ENCODE measurements at regions of chr3 and their contacts with region 1.

Region 1: GRCh38 chr3:138594150-138594934 is at the start of gene CEP70:
- DNase-seq: peak; percentile 88 to 93 (median 92)
- ATAC-seq: peak; percentile 97
- H3K4me3 ChIP-seq: peak within 1 kb of the TSS; percentile 64
- H3K27ac ChIP-seq: peak within 1 kb of the TSS; percentile 78
- H3K4me1 ChIP-seq: peaks cover 0 to 7% of the 10 kb centered on the region in 2 experiments; a peak in 3 of 5 replicates
- H3K27me3 ChIP-seq: no peaks in the 10 kb centered on the region
- CTCF ChIP-seq: peak; percentile 72 to 91 (median 77)
- EP300 ChIP-seq: peak; percentile 61
- POLR2A ChIP-seq: peak; percentile 79
- RAD21 ChIP-seq: peak; percentile 72 to 81
- polyA plus RNA-seq, gene CEP70: 19.5 to 29.3 TPM

Region 2: DNA sequence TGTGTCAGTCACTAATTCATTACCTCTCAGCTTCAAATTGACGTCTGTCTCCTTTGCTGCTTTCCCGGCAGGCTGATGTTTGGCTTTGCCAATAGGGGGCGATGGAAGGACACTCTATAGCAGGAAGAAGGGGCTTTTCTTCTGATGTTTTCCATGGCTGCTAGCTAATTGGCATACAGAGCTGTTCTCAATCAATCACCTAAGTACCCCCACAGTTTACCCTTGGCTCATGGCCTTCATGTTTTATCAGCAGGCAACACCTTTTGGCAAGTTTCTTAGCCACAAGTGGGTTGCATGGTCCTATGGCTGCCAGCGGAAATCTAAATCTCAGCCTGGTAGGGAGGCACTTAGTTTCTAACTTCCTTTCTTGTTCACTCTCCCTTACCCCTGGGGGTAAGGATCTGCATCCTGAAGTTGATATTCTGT is 114.9 kb before region 1 on chr3:
- CTCF ChIA-PET with region 1: no interaction called
- POLR2A ChIA-PET with region 1: no interaction called
- in situ Hi-C with region 1: no loop called
- intact Hi-C with region 1: loop called (anchors 5 kb)
- DNase-seq: peak; percentile 38 to 58 (median 44)
- ATAC-seq: peak; percentile 81
- H3K4me3 ChIP-seq: no peak overlapping the region
- H3K27ac ChIP-seq: no peak overlapping the region
- H3K4me1 ChIP-seq: no peaks in the 10 kb centered on the region
- H3K27me3 ChIP-seq: no peaks in the 10 kb centered on the region
- CTCF ChIP-seq: peak; percentile 67 to 82 (median 75)
- EP300 ChIP-seq: no peak
- POLR2A ChIP-seq: no peak
- RAD21 ChIP-seq: peak; percentile 26 to 76; a peak in 2 of 4 replicates

Region 3: GRCh38 chr3:138834359-138835212 is 240.2 kb after region 1 on chr3 and contains the start of gene PIK3CB:
- CTCF ChIA-PET with region 1: no interaction called
- POLR2A ChIA-PET with region 1: no interaction called
- in situ Hi-C with region 1: no loop called
- intact Hi-C with region 1: loop called (anchors 2 kb)
- DNase-seq: peak; percentile 91 to 94 (median 92)
- ATAC-seq: peak; percentile 88
- H3K4me3 ChIP-seq: peak within 1 kb of the TSS; percentile 99
- H3K27ac ChIP-seq: peak within 1 kb of the TSS; percentile 91
- H3K4me1 ChIP-seq: peaks cover 8 to 9% of the 10 kb centered on the region in 2 experiments; a peak in 4 of 5 replicates
- H3K27me3 ChIP-seq: no peaks in the 10 kb centered on the region
- CTCF ChIP-seq: peak; percentile 59 to 97 (median 75)
- EP300 ChIP-seq: peak; percentile 2; the same call in 1 of the 2 replicates
- POLR2A ChIP-seq: peak; percentile 94
- RAD21 ChIP-seq: peak; percentile 61 to 70
- polyA plus RNA-seq, gene PIK3CB: 15.3 to 19.6 TPM

Region 4: GRCh38 chr3:138923531-138923994 is 329.2 kb after region 1 on chr3:
- CTCF ChIA-PET with region 1: interaction called, 7 read pairs
- POLR2A ChIA-PET with region 1: interaction called, 4 read pairs
- in situ Hi-C with region 1: no loop called
- intact Hi-C with region 1: loop called (anchors 2 kb)
- DNase-seq: peak; percentile 68 to 91 (median 76)
- ATAC-seq: peak; percentile 95
- H3K4me3 ChIP-seq: no peak overlapping the region
- H3K27ac ChIP-seq: no peak overlapping the region
- H3K4me1 ChIP-seq: peaks cover 2 to 3% of the 10 kb centered on the region in 2 experiments; a peak in 4 of 5 replicates
- H3K27me3 ChIP-seq: no peaks in the 10 kb centered on the region
- CTCF ChIP-seq: peak; percentile 86 to 95 (median 95)
- EP300 ChIP-seq: no peak
- POLR2A ChIP-seq: no peak
- RAD21 ChIP-seq: peak; percentile 78 to 93

Region 5: GRCh38 chr3:139020868-139021234 is 426.5 kb after region 1 on chr3 and contains the start of gene PRR23B:
- CTCF ChIA-PET with region 1: no interaction called
- POLR2A ChIA-PET with region 1: no interaction called
- in situ Hi-C with region 1: no loop called
- intact Hi-C with region 1: no loop called
- DNase-seq: peak; percentile 8 to 27 (median 20)
- ATAC-seq: peak; percentile 48; the same call in 1 of the 3 replicates
- H3K4me3 ChIP-seq: no peak within 1 kb of the TSS
- H3K27ac ChIP-seq: no peak within 1 kb of the TSS
- H3K4me1 ChIP-seq: peaks cover 0 to 2% of the 10 kb centered on the region in 2 experiments; a peak in 1 of 5 replicates
- H3K27me3 ChIP-seq: no peaks in the 10 kb centered on the region
- CTCF ChIP-seq: peak; percentile 29 to 50 (median 30); a peak in 4 of 6 replicates
- EP300 ChIP-seq: no peak
- POLR2A ChIP-seq: no peak
- RAD21 ChIP-seq: no peak; a peak in 1 of 4 replicates
- polyA plus RNA-seq, gene PRR23B: not detected

Measured in K562 (cell line).